CD8-positive, alpha-beta T cell (primary cell): ENCODE measurements at regions of chr12 and their contacts with region 1.

Region 1: DNA sequence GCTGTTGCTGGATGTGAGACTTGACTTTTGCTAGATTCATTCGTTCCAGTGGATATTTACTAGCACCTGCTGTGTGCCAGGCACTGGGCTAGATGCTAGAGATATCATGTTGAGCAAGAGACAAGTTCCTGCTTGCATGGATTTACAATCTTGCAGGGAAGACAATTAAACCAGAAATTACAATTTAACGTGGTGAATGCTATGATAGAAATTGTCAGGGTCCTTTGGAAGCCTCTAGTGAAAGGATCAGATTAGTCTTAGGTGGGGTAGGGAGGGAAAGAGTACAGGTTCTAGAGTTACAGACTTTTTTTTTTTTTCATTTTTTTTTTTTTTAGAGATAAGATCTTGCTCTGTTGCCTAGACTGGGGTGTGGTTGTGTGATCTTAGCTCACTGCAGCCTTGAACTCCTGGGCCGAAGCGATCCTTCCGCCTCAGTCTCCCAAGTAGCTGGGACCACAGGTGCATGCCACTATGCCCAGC is 36.7 kb downstream of the SPATS2 start:
- DNase-seq: no peak
- ATAC-seq: peak; percentile 26
- H3K4me3 ChIP-seq: no peak overlapping the region
- H3K4me3 Mint-ChIP-seq: no peak overlapping the region
- H3K27ac ChIP-seq: no peak overlapping the region
- H3K27ac Mint-ChIP-seq: no peak overlapping the region
- H3K4me1 ChIP-seq: peaks cover 10% of the 10 kb centered on the region
- H3K4me1 Mint-ChIP-seq: peaks cover 10% of the 10 kb centered on the region
- H3K27me3 ChIP-seq: no peaks in the 10 kb centered on the region
- H3K27me3 Mint-ChIP-seq: no peaks in the 10 kb centered on the region
- CTCF ChIP-seq: no peak

Region 2: DNA sequence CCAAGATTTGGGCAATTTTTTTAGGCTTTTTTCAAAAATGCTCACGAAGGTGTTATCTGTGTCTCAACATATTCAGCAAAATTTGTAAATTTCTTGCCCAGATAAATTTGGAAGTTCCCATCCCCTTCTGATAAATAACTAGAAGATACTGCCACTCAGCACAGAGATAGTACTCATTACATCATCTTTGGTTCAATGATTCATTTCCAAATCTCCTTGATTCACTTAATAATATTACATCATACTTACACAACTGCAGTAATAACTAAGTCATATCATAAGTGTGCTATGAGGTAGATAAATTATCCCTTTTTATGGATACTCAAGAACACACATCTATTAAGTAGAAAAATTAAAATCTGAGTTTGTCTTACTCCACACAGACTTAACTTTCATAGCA is 1787.6 kb before region 1 on chr12:
- CTCF ChIA-PET with region 1: no interaction called
- POLR2A ChIA-PET with region 1: no interaction called
- intact Hi-C with region 1: no loop called
- DNase-seq: no peak
- ATAC-seq: no peak
- H3K4me3 ChIP-seq: no peak overlapping the region
- H3K4me3 Mint-ChIP-seq: no peak overlapping the region
- H3K27ac ChIP-seq: no peak overlapping the region
- H3K27ac Mint-ChIP-seq: no peak overlapping the region
- H3K4me1 ChIP-seq: no peaks in the 10 kb centered on the region
- H3K4me1 Mint-ChIP-seq: no peaks in the 10 kb centered on the region
- H3K27me3 ChIP-seq: no peaks in the 10 kb centered on the region
- H3K27me3 Mint-ChIP-seq: no peaks in the 10 kb centered on the region
- CTCF ChIP-seq: no peak

Region 3: GRCh38 chr12:49478949-49479664 is 75.1 kb after region 1 on chr12:
- CTCF ChIA-PET with region 1: no interaction called
- POLR2A ChIA-PET with region 1: no interaction called
- intact Hi-C with region 1: loop called in 1 of 2 experiments (anchors 10 kb)
- DNase-seq: no peak
- ATAC-seq: no peak
- H3K4me3 ChIP-seq: no peak overlapping the region
- H3K4me3 Mint-ChIP-seq: no peak overlapping the region
- H3K27ac ChIP-seq: no peak overlapping the region
- H3K27ac Mint-ChIP-seq: no peak overlapping the region
- H3K4me1 ChIP-seq: no peaks in the 10 kb centered on the region
- H3K4me1 Mint-ChIP-seq: peaks cover 13% of the 10 kb centered on the region
- H3K27me3 ChIP-seq: no peaks in the 10 kb centered on the region
- H3K27me3 Mint-ChIP-seq: no peaks in the 10 kb centered on the region
- CTCF ChIP-seq: no peak